Activated CD4-positive, alpha-beta memory T cell treated with anti-CD3 and anti-CD28 coated beads, Interleukin-2, amount 10 ng/mL, durations not matched to agents 7 days and 5 days (primary cell): ENCODE measurements at regions of chr5 and their contacts with region 1.

Region 1: GRCh38 chr5:149474212-149474618 is 77.0 kb downstream of the CSNK1A1 start:
- DNase-seq: no peak
- H3K4me3 Mint-ChIP-seq: no peak overlapping the region
- H3K27ac Mint-ChIP-seq: no peak overlapping the region
- H3K4me1 Mint-ChIP-seq: no peaks in the 10 kb centered on the region
- H3K27me3 Mint-ChIP-seq: peaks cover 8% of the 10 kb centered on the region

Region 2: DNA sequence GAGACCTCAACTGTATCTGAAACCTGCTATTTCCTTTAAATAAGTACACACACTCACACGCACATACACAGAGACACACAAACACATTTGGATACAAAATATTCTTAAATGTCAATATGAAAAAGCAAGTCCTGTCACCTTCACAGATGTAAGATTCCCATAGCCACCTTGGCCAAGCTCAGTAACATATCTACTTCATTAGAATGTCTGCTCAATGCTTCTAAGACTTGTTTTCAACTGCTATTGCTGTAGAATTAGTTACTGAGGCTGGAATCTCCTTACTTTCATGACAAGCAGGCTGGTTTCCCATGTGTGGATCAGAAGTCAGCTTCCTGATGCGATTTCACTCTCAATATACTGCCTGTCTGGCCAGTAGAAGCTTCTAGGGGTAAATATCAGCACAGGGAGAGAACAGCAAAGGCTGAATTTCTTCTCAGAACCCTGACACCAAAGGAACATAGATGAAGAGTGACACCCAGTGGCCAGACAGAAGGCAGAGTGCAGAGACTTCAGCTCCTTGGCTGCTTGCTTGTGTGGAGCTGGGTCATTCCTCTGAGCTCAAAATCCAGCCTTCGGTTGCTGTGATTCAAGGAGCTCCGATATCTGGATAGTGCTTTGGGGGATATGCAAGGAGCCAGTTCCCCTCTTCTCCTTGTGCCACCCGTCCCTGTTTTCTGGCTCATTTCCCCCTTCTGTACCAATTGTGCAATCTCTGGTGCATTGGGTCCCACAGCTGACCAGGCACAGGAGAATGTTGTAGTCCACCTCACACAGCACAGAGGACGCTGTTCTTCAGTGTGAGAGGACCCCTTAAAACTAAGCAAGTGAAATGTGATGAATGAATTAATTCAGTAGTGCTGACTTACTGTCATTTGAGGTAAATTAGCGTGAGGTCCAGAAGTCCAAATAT is 359.6 kb before region 1 on chr5:
- CTCF ChIA-PET with region 1: no interaction called
- POLR2A ChIA-PET with region 1: no interaction called
- DNase-seq: peak; percentile 52
- H3K4me3 Mint-ChIP-seq: no peak overlapping the region
- H3K27ac Mint-ChIP-seq: no peak overlapping the region
- H3K4me1 Mint-ChIP-seq: peaks cover 7% of the 10 kb centered on the region
- H3K27me3 Mint-ChIP-seq: peaks cover 14% of the 10 kb centered on the region

Region 3: DNA sequence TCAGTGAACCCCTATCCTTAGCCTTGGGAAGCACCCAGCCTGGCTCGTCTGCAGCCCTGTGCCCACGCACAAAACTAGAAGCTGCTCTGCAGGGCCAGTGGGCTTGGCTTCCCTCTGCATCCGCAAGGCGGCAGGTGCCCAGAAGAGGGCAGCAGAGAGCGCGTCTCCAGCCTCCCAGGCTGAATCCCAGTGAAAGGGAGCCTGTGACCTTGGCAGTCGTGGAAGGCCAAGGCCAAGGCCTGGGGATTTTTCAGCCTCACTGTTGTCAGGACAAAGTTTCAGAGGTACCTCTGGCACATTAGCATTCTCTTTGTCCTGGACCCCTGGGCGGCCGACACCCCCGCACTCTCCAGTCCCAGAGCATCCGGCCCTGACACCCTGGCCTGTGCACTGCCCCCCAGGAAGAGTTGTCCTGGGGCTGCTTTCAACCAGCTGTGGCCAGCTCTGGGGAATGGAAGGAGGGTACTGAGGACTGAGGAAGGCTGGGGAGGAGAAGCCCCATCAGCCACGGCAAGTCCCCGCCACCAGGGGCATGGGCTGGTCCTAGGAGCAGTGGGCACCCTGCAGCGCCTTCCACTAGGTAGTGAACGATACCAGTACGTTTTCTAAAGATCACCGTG is 31.5 kb before region 1 on chr5:
- CTCF ChIA-PET with region 1: interaction called, 10 read pairs
- POLR2A ChIA-PET with region 1: no interaction called
- DNase-seq: peak; percentile 75
- H3K4me3 Mint-ChIP-seq: no peak overlapping the region
- H3K27ac Mint-ChIP-seq: peak overlapping the region; percentile 24
- H3K4me1 Mint-ChIP-seq: peaks cover 34% of the 10 kb centered on the region
- H3K27me3 Mint-ChIP-seq: no peaks in the 10 kb centered on the region

Region 4: GRCh38 chr5:149459891-149460290 is 14.3 kb before region 1 on chr5:
- CTCF ChIA-PET with region 1: no interaction called
- POLR2A ChIA-PET with region 1: no interaction called
- DNase-seq: no peak
- H3K4me3 Mint-ChIP-seq: no peak overlapping the region
- H3K27ac Mint-ChIP-seq: no peak overlapping the region
- H3K4me1 Mint-ChIP-seq: no peaks in the 10 kb centered on the region
- H3K27me3 Mint-ChIP-seq: peaks cover 9% of the 10 kb centered on the region